ENCODE measurements at regions of chr10 and their contacts with region 1.

Region 1: GRCh38 chr10:100009793-100010676 is at the start of gene DNMBP:
- DNase-seq: peak; percentile 83 to 91
- H3K4me3 ChIP-seq: peak within 1 kb of the TSS; percentile 90
- H3K4me3 Mint-ChIP-seq: peak within 1 kb of the TSS; percentile 94
- H3K27ac Mint-ChIP-seq: peak within 1 kb of the TSS; percentile 53
- H3K4me1 ChIP-seq: peaks cover 34% of the 10 kb centered on the region
- H3K4me1 Mint-ChIP-seq: peaks cover 35% of the 10 kb centered on the region
- H3K27me3 ChIP-seq: no peaks in the 10 kb centered on the region
- H3K27me3 Mint-ChIP-seq: no peaks in the 10 kb centered on the region
- CTCF ChIP-seq: peak; percentile 48 to 63
- total RNA-seq, gene DNMBP: 30.6 and 31.0 TPM in 2 replicates

Region 2: DNA sequence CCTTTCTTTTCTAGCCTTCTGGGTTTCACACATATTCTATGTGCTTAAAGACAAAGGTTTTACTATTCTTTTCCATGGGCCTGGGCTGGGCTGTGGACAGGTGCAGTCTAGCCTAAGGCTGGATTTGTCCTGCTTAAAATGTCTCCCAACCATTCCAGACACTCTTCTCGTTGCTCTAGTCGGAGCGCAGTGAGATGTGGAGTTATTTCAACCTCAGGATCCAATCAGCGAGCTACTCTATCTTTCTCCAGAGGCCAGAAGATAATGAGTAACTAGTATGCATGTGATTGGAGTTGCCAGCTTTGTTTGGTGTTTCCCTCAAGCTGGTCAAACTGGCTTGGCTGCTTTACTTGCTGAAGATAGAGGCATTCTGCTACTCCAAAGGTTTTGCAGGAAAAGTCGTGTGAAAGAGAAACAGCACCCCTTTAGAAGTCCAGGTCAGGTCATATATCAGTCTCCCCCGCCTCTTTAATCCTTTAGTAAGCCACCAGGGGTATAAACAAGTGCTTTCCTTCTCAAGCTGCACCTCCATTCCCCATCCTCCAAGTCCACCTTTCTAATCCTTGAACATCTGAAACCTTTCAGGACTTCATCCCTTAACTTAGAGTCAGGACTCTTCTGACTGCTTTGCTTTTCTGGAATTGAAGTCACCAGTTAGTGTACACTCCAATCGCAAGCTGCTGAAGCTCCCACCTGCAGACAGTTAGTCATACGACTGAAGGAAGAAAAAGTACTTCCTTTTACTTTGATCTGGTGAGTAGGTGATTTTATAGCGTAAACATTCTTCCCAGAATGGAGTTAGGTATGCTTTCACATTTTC is 79.1 kb before region 1 on chr10:
- CTCF ChIA-PET with region 1: interaction called, 4 read pairs
- POLR2A ChIA-PET with region 1: no interaction called
- intact Hi-C with region 1: loop called (anchors 2 kb)
- DNase-seq: peak; percentile 94 to 95
- H3K4me3 ChIP-seq: peak overlapping the region; percentile 56
- H3K4me3 Mint-ChIP-seq: peak overlapping the region; percentile 89
- H3K27ac Mint-ChIP-seq: peak overlapping the region; percentile 89
- H3K4me1 ChIP-seq: peaks cover 32% of the 10 kb centered on the region
- H3K4me1 Mint-ChIP-seq: peaks cover 27% of the 10 kb centered on the region
- H3K27me3 ChIP-seq: no peaks in the 10 kb centered on the region
- H3K27me3 Mint-ChIP-seq: no peaks in the 10 kb centered on the region
- CTCF ChIP-seq: peak in 1 of 2 experiments; percentile 9

Region 3: GRCh38 chr10:99976886-99977665 is 33.0 kb before region 1 on chr10:
- CTCF ChIA-PET with region 1: interaction called, 5 read pairs
- POLR2A ChIA-PET with region 1: no interaction called
- intact Hi-C with region 1: loop called (anchors 5 kb)
- DNase-seq: peak in 1 of 2 experiments; percentile 14
- H3K4me3 ChIP-seq: no peak overlapping the region
- H3K4me3 Mint-ChIP-seq: no peak overlapping the region
- H3K27ac Mint-ChIP-seq: peak overlapping the region; percentile 33
- H3K4me1 ChIP-seq: peaks cover 28% of the 10 kb centered on the region; the same call in 1 of the 2 replicates
- H3K4me1 Mint-ChIP-seq: peaks cover 11% of the 10 kb centered on the region
- H3K27me3 ChIP-seq: no peaks in the 10 kb centered on the region
- H3K27me3 Mint-ChIP-seq: no peaks in the 10 kb centered on the region
- CTCF ChIP-seq: no peak

Region 4: DNA sequence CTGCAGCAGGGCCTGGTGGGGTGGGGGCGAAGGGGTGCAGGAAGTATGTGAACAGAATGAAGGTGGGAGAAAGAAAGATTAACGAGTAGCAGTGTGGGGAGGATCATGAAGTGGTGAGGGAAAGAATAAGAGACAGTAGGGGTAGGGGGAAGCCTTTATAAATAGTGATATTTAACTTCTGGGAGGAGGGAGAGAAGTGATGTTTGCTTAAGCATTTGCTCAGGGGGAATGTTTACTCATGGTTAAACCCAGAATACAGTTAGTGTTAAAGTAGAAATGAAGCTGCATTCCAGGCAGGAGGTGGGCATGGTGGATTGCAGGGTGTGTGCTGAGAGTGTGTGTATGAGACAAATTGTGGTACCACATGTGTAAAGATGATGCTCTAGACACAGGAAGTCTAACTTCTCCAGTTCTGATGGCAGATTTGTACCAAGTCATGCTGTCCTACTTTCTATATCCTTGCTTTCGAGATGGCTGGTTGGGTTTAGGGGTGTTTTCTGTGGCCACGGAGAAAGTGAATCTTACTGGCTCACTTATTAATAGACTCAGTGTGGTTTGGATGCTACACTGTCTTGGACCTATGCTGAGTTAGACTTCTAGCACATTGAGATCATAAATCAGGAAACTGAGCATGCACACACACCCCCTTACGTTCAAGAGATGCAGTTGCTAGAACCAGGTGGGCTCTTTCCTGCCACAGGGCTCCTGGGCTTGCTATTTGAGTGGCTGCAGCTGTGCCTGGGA is 10.3 kb after region 1 on chr10:
- CTCF ChIA-PET with region 1: interaction called, 7 read pairs
- POLR2A ChIA-PET with region 1: no interaction called
- intact Hi-C with region 1: loop called (anchors 1 kb)
- DNase-seq: no peak
- H3K4me3 ChIP-seq: no peak overlapping the region
- H3K4me3 Mint-ChIP-seq: peak overlapping the region; percentile 60
- H3K27ac Mint-ChIP-seq: peak overlapping the region; percentile 27
- H3K4me1 ChIP-seq: peaks cover 25% of the 10 kb centered on the region
- H3K4me1 Mint-ChIP-seq: peaks cover 15% of the 10 kb centered on the region
- H3K27me3 ChIP-seq: no peaks in the 10 kb centered on the region
- H3K27me3 Mint-ChIP-seq: no peaks in the 10 kb centered on the region
- CTCF ChIP-seq: no peak

Region 5: DNA sequence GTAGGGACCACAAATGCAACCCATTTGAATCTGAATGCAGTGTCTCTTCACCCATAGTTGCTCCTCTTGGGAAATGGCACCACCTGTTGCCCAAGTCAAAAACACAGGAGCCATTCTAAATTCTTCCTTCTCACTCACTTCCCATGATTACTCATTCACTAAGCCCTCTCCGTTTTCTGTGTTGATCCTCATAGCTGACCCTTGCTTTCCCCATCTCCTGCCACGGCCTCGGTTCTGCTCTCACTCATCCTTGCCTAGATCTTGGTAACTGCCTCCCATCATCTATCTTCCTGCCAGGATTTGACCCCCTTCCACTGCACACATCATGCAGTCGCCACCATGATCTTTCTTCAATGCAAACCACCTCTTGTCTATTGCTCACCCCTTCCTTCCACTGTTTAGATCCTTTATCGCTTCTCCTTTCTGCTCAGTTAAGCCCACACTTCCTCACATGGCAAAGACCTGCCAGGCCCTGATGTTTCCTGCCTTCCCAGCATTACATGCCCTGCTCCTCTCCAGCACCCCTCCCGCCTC is 90.7 kb after region 1 on chr10:
- CTCF ChIA-PET with region 1: interaction called, 3 read pairs
- POLR2A ChIA-PET with region 1: no interaction called
- intact Hi-C with region 1: loop called (anchors 1 kb)
- DNase-seq: peak in 1 of 2 experiments; percentile 58
- H3K4me3 ChIP-seq: no peak overlapping the region
- H3K4me3 Mint-ChIP-seq: no peak overlapping the region
- H3K27ac Mint-ChIP-seq: no peak overlapping the region
- H3K4me1 ChIP-seq: peaks cover 19% of the 10 kb centered on the region
- H3K4me1 Mint-ChIP-seq: peaks cover 19% of the 10 kb centered on the region
- H3K27me3 ChIP-seq: no peaks in the 10 kb centered on the region
- H3K27me3 Mint-ChIP-seq: no peaks in the 10 kb centered on the region
- CTCF ChIP-seq: peak; percentile 40 to 72